ENCODE measurements at regions of chr17 and their contacts with region 1.

Region 1: DNA sequence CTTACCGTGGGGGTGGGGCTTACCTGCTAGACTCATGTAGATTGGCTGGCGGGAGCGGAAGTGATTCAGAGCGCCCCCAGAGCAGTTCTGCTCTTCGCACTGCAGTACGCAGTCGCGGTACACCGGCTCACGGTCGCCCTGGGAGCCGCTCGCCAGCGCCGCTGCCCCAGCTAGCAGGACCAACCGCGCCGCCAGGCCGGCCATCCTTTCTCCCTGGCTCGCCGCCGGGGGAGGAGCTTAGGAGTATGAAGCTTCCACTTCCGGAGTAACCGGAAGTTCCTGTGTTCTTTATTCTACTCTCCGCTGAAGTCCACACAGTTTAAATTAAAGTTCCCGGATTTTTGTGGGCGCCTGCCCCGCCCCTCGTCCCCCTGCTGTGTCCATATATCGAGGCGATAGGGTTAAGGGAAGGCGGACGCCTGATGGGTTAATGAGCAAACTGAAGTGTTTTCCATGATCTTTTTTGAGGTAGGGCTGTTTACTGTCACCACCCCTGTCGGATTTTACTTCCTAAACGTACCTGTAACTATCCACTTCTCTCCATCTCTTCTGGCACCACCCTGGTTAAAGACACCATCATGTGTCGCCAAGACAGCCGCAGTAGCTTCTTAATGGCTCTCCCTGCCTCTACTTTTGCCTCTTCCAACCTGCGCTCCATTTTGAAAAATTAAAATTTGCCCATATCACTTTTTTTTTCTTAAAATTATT is at the start of gene PGAP3:
- DNase-seq: peak; percentile 91
- ATAC-seq: peak; percentile 95
- H3K4me3 ChIP-seq: peak within 1 kb of the TSS; percentile 84 to 89
- H3K27ac ChIP-seq: peak within 1 kb of the TSS; percentile 95
- H3K4me1 ChIP-seq: peaks cover 10 to 19% of the 10 kb centered on the region in 2 experiments; a peak in 3 of 4 replicates
- H3K27me3 ChIP-seq: no peaks in the 10 kb centered on the region
- CTCF ChIP-seq: no peak
- POLR2A ChIP-seq: no peak
- RAD21 ChIP-seq: no peak
- total RNA-seq, gene PGAP3: 15.2 TPM

Region 2: GRCh38 chr17:39325528-39326240 is 362.3 kb before region 1 on chr17:
- CTCF ChIA-PET with region 1: no interaction called
- POLR2A ChIA-PET with region 1: no interaction called
- RAD21 ChIA-PET with region 1: no interaction called
- intact Hi-C with region 1: no loop called
- DNase-seq: no peak
- ATAC-seq: no peak
- H3K4me3 ChIP-seq: no peak overlapping the region
- H3K27ac ChIP-seq: no peak overlapping the region
- H3K4me1 ChIP-seq: peaks cover 3 to 11% of the 10 kb centered on the region in 2 experiments
- H3K27me3 ChIP-seq: no peaks in the 10 kb centered on the region
- CTCF ChIP-seq: no peak
- POLR2A ChIP-seq: no peak
- RAD21 ChIP-seq: no peak

Region 3: DNA sequence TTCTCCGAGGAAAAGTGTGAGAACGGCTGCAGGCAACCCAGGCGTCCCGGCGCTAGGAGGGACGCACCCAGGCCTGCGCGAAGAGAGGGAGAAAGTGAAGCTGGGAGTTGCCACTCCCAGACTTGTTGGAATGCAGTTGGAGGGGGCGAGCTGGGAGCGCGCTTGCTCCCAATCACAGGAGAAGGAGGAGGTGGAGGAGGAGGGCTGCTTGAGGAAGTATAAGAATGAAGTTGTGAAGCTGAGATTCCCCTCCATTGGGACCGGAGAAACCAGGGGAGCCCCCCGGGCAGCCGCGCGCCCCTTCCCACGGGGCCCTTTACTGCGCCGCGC is 11.8 kb after region 1 on chr17 and contains the start of gene ERBB2:
- CTCF ChIA-PET with region 1: no interaction called
- POLR2A ChIA-PET with region 1: interaction called, 16 read pairs
- RAD21 ChIA-PET with region 1: no interaction called
- intact Hi-C with region 1: no loop called
- DNase-seq: peak; percentile 57
- ATAC-seq: peak; percentile 92
- H3K4me3 ChIP-seq: peak within 1 kb of the TSS; percentile 76 to 88
- H3K27ac ChIP-seq: peak within 1 kb of the TSS; percentile 76
- H3K4me1 ChIP-seq: peaks cover 20 to 44% of the 10 kb centered on the region in 2 experiments
- H3K27me3 ChIP-seq: no peaks in the 10 kb centered on the region
- CTCF ChIP-seq: no peak
- POLR2A ChIP-seq: peak; percentile 66
- RAD21 ChIP-seq: no peak
- total RNA-seq, gene ERBB2: 75.8 TPM

Region 4: DNA sequence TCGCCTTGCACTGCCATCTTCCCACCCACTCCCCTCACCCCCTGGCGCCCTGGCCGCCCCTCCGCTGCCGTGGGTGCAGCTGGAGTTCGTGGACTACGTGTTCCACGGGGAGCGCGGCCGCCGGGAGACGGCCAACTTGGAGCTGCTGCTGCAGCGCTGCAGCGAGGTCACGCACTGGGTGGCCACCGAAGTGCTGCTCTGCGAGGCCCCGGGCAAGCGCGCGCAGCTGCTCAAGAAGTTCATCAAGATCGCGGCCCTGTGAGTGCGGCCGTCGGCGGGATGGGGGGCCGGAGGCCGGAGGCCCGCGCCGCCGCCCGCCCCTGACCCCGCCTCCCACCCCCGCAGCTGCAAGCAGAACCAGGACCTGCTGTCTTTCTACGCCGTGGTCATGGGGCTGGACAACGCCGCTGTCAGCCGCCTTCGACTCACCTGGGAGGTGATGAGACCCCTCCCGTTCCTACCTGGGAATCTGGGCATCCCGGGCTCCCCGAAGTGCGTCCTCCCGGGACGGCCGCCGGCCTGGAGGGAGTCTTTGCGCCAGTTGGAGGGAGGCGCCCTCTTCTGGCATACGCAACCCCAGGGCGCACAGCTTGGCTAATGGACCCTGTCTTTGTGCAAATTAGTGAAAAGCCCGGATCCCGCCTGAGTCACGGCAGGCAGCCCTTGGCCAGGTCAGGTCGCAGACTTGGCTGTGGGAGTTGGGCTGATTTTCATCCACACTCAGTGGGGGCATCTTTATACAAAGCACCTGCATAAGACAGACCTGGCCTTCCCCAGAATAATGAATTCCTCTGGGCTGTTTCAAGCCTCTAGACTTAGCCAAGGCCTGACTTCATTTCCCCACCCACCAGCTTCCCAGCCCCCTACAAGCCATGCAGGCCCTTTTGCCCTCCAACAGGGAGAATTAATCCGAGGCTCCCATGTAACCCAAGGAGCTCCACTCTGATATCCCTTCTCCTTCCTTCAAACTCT is 503.6 kb after region 1 on chr17:
- CTCF ChIA-PET with region 1: no interaction called
- POLR2A ChIA-PET with region 1: no interaction called
- RAD21 ChIA-PET with region 1: no interaction called
- intact Hi-C with region 1: no loop called
- DNase-seq: peak; percentile 43
- ATAC-seq: peak; percentile 90
- H3K4me3 ChIP-seq: peak overlapping the region; percentile 7 to 25; a peak in 2 of 4 replicates
- H3K27ac ChIP-seq: no peak overlapping the region
- H3K4me1 ChIP-seq: peaks cover 13 to 28% of the 10 kb centered on the region in 2 experiments
- H3K27me3 ChIP-seq: no peaks in the 10 kb centered on the region
- CTCF ChIP-seq: peak; percentile 61 to 81 (median 74)
- POLR2A ChIP-seq: no peak
- RAD21 ChIP-seq: peak; percentile 80